H1 (cell line): ENCODE measurements at regions of chr7 and their contacts with region 1.

Region 1: DNA sequence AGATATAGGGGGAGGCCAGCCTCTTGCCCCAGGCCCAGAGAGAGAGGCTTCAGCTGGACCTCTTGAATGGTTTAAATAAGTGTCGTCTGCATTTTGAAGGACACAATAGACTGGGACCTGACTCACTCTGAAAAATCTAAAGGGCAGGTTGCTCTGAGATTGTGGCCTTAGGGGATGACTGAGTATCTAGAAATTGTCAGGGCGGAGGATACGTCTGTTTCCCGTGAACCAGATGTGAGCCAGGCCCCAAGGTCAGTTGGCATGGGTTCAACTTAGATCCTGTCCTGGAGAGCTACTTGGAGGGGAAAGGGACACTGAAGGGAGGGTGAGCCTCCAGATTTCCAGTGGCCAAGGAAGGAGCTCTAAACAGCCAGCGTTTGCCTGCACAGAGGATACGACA is 110.2 kb downstream of the CHN2 start:
- DNase-seq: no peak
- H3K4me3 ChIP-seq: no peak overlapping the region
- H3K27ac ChIP-seq: no peak overlapping the region
- H3K4me1 ChIP-seq: peaks cover 0 to 10% (median 6%) of the 10 kb centered on the region in 4 experiments; a peak in 5 of 7 replicates
- H3K27me3 ChIP-seq: no peaks in the 10 kb centered on the region
- CTCF ChIP-seq: no peak
- EP300 ChIP-seq: no peak
- POLR2A ChIP-seq: no peak
- RAD21 ChIP-seq: no peak

Region 2: DNA sequence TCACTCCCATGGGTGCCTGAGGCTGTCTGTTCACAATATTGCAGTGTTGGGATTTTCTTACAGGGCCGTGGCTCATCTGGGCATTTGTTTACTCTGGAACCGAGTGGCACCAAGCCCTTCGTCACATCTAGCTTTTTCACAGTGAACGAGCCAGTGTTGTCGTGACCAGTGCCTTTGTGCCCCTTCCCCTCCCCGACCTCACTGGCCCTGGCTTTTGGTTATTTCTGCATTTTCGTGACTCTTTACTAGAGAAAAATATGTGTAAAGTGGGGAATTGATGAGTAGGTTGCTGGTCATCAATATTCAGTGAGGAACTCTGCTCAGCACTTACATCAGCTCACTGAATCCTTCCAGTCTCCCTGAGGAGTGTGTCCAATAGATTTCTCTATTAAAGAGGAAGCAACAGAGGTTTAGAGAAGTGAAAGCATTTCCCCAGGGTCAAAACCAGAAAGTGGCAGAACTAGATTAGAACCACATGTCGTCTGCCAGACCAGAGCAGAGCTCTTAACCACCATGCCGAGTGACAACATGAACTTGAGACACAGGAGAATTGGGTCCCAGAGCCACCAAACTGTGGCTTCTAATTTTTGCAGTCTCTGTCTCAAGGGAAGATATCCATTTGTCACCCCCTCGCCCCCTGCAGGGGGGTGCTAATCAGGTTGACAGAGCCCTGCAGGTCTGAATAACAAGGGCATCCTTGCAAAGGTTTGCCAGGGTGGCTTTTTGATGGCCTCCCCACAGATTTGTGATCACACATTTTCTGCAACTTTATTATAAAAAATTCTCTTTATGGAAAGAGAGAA is 15.2 kb after region 1 on chr7:
- CTCF ChIA-PET with region 1: interaction called, 12 read pairs
- POLR2A ChIA-PET with region 1: no interaction called
- DNase-seq: no peak
- H3K4me3 ChIP-seq: no peak overlapping the region
- H3K27ac ChIP-seq: no peak overlapping the region
- H3K4me1 ChIP-seq: peaks cover 0 to 10% (median 8%) of the 10 kb centered on the region in 4 experiments; a peak in 4 of 7 replicates
- H3K27me3 ChIP-seq: no peaks in the 10 kb centered on the region
- CTCF ChIP-seq: peak in 1 of 3 experiments; percentile 7; a peak in 1 of 4 replicates
- EP300 ChIP-seq: no peak
- POLR2A ChIP-seq: no peak
- RAD21 ChIP-seq: no peak

Region 3: GRCh38 chr7:29442146-29442545 is 137.4 kb after region 1 on chr7:
- CTCF ChIA-PET with region 1: no interaction called
- POLR2A ChIA-PET with region 1: no interaction called
- DNase-seq: no peak
- H3K4me3 ChIP-seq: no peak overlapping the region
- H3K27ac ChIP-seq: no peak overlapping the region
- H3K4me1 ChIP-seq: peaks cover 0 to 3% (median 0%) of the 10 kb centered on the region in 4 experiments; a peak in 1 of 7 replicates
- H3K27me3 ChIP-seq: no peaks in the 10 kb centered on the region
- CTCF ChIP-seq: no peak
- EP300 ChIP-seq: no peak
- POLR2A ChIP-seq: no peak
- RAD21 ChIP-seq: no peak

Region 4: DNA sequence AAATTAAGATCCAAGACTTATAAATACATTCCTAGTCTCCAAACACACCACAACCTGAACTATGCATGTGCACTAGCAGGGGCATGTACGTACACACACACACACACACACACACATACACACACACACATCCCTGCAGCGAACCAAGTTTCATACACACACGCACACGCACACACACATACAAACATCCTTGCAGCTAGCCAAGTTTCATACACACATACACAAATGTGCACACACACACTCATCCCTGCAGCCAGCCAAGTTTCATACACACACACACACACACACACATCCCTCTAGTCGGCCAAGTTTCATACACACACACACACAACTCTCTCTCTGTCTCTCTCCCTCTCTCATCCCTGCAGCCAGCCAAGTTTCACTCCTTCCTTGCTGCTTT is 418.8 kb after region 1 on chr7:
- CTCF ChIA-PET with region 1: no interaction called
- POLR2A ChIA-PET with region 1: no interaction called
- DNase-seq: no peak
- H3K4me3 ChIP-seq: no peak overlapping the region
- H3K27ac ChIP-seq: no peak overlapping the region
- H3K4me1 ChIP-seq: peaks cover 0 to 5% (median 0%) of the 10 kb centered on the region in 4 experiments; a peak in 3 of 7 replicates
- H3K27me3 ChIP-seq: no peaks in the 10 kb centered on the region
- CTCF ChIP-seq: no peak
- EP300 ChIP-seq: no peak
- POLR2A ChIP-seq: no peak
- RAD21 ChIP-seq: no peak